Adrenal gland (tissue), 19 donors: ENCODE measurements at regions of chr3 and their contacts with region 1.

Region 1: GRCh38 chr3:156674046-156674910 is at the start of gene TIPARP:
- DNase-seq: peak; percentile 99 to 100 (median 99)
- H3K4me3 ChIP-seq: peak within 1 kb of the TSS; percentile 73 to 87 (median 84)
- H3K27ac ChIP-seq: peak within 1 kb of the TSS; percentile 93 to 99 (median 97)
- H3K4me1 ChIP-seq: peaks cover 0 to 22% of the 10 kb centered on the region in 2 donors
- H3K27me3 ChIP-seq: no peaks in the 10 kb centered on the region
- CTCF ChIP-seq: peak; percentile 45 to 85 (median 74)
- POLR2A ChIP-seq: peak; percentile 98 to 100
- total RNA-seq, gene TIPARP: 15.8 to 75.5 (median 19.8) TPM

Region 2: DNA sequence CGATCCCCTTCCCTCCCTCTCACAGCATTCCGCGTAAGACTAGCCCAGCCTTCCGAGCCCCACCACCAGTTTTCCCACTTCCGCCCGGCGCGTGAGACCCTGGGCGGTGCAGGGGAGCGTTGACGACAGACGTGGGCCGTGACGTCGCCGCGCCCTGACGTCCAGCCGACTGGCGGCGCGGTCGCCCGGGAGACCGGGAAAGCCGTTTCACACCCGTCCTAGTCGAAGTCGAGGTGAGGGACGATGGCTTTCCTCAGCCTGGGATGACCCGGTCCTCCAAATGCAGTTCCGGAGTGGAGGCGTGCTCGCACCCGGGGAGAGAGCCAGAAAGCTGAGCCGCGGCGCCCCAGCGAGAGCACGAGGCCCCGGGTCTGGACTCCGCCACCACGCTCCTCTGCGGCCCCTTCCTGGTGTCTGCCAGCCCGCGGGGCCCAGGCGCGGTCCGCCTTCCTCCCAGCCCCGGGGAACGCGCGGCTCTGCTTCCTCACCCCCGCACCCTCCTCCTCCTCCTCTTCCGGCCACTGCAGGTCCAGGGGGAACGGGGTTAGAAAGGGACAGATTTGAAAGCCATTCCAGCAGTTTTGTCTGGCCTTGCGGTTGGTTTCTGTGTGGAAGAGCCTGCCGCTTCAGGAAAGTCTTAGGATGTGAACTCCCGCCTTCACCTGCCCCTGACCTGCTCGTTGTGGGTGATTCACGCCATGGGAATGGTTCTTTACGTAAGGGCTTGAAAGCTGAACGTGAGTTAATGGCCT is 152.0 kb after region 1 on chr3 and contains the start of gene LEKR1:
- intact Hi-C with region 1: loop called in 1 of 2 experiments (anchors 5 kb)
- DNase-seq: peak; percentile 89 to 96 (median 90)
- H3K4me3 ChIP-seq: peak within 1 kb of the TSS; percentile 40 to 74 (median 64)
- H3K27ac ChIP-seq: peak within 1 kb of the TSS; percentile 90 to 100 (median 94)
- H3K4me1 ChIP-seq: no peaks in the 10 kb centered on the region
- H3K27me3 ChIP-seq: no peaks in the 10 kb centered on the region
- CTCF ChIP-seq: no peak
- POLR2A ChIP-seq: peak; percentile 67 to 82
- total RNA-seq, gene LEKR1: 0.28 to 2.3 (median 1.8) TPM

Region 3: GRCh38 chr3:157136647-157137387 is 462.5 kb after region 1 on chr3:
- intact Hi-C with region 1: loop called in 1 of 2 experiments (anchors 5 kb)
- DNase-seq: peak in 4 of 7 donors; percentile 38 to 73 (median 57)
- H3K4me3 ChIP-seq: no peak overlapping the region
- H3K27ac ChIP-seq: peak overlapping the region; percentile 6 to 77 (median 56)
- H3K4me1 ChIP-seq: peaks cover 25 to 39% of the 10 kb centered on the region in 2 donors
- H3K27me3 ChIP-seq: no peaks in the 10 kb centered on the region
- CTCF ChIP-seq: no peak
- POLR2A ChIP-seq: no peak